Natural killer cell (primary cell): ENCODE measurements at regions of chr18 and their contacts with region 1.

Region 1: GRCh38 chr18:23586249-23587196 is at the start of gene NPC1:
- DNase-seq: peak; percentile 93 to 96
- ATAC-seq: peak; percentile 86 to 95 (median 89)
- H3K4me3 ChIP-seq: peak within 1 kb of the TSS; percentile 99
- H3K4me3 Mint-ChIP-seq: peak within 1 kb of the TSS; percentile 96
- H3K27ac ChIP-seq: peak within 1 kb of the TSS; percentile 100
- H3K27ac Mint-ChIP-seq: peak within 1 kb of the TSS; percentile 81 to 94
- H3K4me1 ChIP-seq: peaks cover 37% of the 10 kb centered on the region
- H3K4me1 Mint-ChIP-seq: peaks cover 40 to 47% of the 10 kb centered on the region in 2 donors
- H3K27me3 ChIP-seq: no peaks in the 10 kb centered on the region
- H3K27me3 Mint-ChIP-seq: no peaks in the 10 kb centered on the region
- CTCF ChIP-seq: peak; percentile 96
- total RNA-seq, gene NPC1: 143 to 203 (median 173) TPM

Region 2: DNA sequence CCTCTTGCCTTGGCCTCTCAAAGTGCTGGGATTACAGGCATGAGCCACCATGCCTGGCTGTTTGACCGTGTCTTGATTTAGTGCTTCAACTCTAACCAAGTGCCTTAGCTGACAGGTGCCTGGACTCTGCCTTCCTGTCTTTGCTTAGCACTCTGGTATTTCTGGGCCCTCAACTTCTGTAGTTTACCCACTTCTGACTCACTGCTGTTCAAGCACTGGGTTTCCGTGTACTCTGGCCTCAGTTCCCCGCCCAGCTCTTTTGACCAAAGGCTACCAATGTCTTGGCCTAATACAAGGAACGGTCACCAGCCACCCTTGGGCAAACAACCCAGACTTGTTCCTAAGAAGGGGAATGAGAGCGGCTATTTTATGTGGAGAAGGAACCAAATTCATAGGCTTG is 486.9 kb before region 1 on chr18:
- intact Hi-C with region 1: no loop called
- DNase-seq: no peak
- ATAC-seq: no peak
- H3K4me3 ChIP-seq: no peak overlapping the region
- H3K4me3 Mint-ChIP-seq: no peak overlapping the region
- H3K27ac ChIP-seq: no peak overlapping the region
- H3K27ac Mint-ChIP-seq: no peak overlapping the region
- H3K4me1 ChIP-seq: no peaks in the 10 kb centered on the region
- H3K4me1 Mint-ChIP-seq: no peaks in the 10 kb centered on the region
- H3K27me3 ChIP-seq: no peaks in the 10 kb centered on the region
- H3K27me3 Mint-ChIP-seq: peaks cover 0 to 7% of the 10 kb centered on the region in 2 donors
- CTCF ChIP-seq: no peak

Region 3: GRCh38 chr18:23503038-23503962 is 83.2 kb before region 1 on chr18 and contains the start of gene RMC1:
- intact Hi-C with region 1: loop called (anchors 1 kb)
- DNase-seq: peak; percentile 97 to 98
- ATAC-seq: peak; percentile 89 to 97 (median 91)
- H3K4me3 ChIP-seq: peak within 1 kb of the TSS; percentile 81
- H3K4me3 Mint-ChIP-seq: peak within 1 kb of the TSS; percentile 98
- H3K27ac ChIP-seq: peak within 1 kb of the TSS; percentile 90
- H3K27ac Mint-ChIP-seq: peak within 1 kb of the TSS; percentile 94
- H3K4me1 ChIP-seq: peaks cover 47% of the 10 kb centered on the region
- H3K4me1 Mint-ChIP-seq: peaks cover 53 to 55% of the 10 kb centered on the region in 2 donors
- H3K27me3 ChIP-seq: no peaks in the 10 kb centered on the region
- H3K27me3 Mint-ChIP-seq: no peaks in the 10 kb centered on the region
- CTCF ChIP-seq: no peak
- total RNA-seq, gene RMC1: 71.1 to 84.4 (median 77.2) TPM

Region 4: DNA sequence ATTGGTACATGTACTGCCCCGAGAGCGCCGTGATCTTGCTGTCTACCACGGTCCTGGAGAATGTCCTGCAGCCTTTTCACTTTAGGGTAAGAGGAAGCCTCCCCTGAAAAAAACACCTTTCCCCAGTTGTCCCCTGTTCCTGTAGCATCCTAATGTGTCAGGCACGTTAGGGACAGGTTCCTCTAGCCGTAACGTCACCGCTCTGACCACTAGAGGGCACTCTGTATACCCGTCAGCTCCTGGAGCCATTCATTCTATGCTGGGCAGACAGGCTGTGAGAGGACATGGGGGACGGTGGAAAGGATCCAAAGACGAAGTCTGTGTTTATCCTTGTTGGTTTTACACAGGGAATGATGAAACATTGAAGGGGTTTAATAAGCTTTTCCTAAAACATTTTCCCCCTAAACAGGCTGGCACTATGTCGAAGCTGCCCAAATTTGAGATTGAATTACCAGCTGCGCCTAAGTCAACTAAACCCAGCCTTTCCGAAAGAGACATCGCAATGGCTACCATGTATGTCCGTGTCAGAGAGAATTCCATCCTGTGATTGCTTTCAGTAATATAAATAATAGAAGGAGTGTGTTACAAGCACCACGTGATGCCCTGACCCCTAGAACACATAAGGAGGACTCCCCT is 70.5 kb before region 1 on chr18:
- intact Hi-C with region 1: loop called (anchors 1 kb)
- DNase-seq: peak; percentile 57 to 89
- ATAC-seq: peak; percentile 95 to 99 (median 98)
- H3K4me3 ChIP-seq: no peak overlapping the region
- H3K4me3 Mint-ChIP-seq: no peak overlapping the region
- H3K27ac ChIP-seq: no peak overlapping the region
- H3K27ac Mint-ChIP-seq: peak overlapping the region; percentile 58 to 59
- H3K4me1 ChIP-seq: peaks cover 3% of the 10 kb centered on the region
- H3K4me1 Mint-ChIP-seq: peaks cover 13 to 19% of the 10 kb centered on the region in 2 donors
- H3K27me3 ChIP-seq: no peaks in the 10 kb centered on the region
- H3K27me3 Mint-ChIP-seq: no peaks in the 10 kb centered on the region
- CTCF ChIP-seq: peak; percentile 79

Region 5: GRCh38 chr18:23547846-23548245 is 38.7 kb before region 1 on chr18:
- intact Hi-C with region 1: loop called (anchors 2 kb)
- DNase-seq: no peak
- ATAC-seq: no peak
- H3K4me3 ChIP-seq: no peak overlapping the region
- H3K4me3 Mint-ChIP-seq: no peak overlapping the region
- H3K27ac ChIP-seq: no peak overlapping the region
- H3K27ac Mint-ChIP-seq: peak overlapping the region; percentile 2 to 15
- H3K4me1 ChIP-seq: no peaks in the 10 kb centered on the region
- H3K4me1 Mint-ChIP-seq: peaks cover 16 to 20% of the 10 kb centered on the region in 2 donors
- H3K27me3 ChIP-seq: no peaks in the 10 kb centered on the region
- H3K27me3 Mint-ChIP-seq: no peaks in the 10 kb centered on the region
- CTCF ChIP-seq: no peak

Region 6: DNA sequence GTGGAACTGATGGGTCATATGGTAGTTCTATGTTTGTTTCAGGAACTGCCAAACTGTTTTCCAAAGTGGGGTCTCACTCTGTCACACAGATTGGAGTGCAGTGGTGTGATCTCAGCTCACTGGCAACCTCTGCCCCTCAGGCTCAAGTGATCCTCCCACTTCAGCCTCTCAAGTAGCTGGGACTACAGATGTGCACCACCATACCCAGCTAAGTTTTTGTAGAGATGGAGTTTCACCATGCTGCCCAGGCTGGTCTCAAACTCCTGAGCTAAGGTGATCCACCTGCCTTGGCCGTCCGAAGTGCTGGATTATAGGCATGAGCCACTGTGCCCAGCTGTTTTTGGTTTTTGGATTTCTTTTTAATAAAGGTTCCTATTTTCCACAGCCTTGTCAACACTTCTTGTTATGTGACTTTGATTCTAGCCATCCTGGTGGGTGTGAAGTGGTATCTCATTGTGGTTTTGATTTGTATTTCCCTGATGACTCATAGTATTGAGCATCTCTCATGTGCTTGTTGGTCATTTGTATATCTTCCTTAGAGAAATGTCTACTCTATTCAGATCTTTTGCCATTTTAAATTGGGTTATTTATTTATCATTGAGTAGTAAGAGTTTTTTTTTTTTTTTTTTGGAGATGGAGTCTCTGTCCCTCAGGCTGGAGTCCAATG is 23.0 kb before region 1 on chr18:
- intact Hi-C with region 1: loop called (anchors 1 kb)
- DNase-seq: peak in 1 of 2 donors; percentile 61
- ATAC-seq: peak; percentile 88 to 97 (median 90)
- H3K4me3 ChIP-seq: no peak overlapping the region
- H3K4me3 Mint-ChIP-seq: peak overlapping the region; percentile 10
- H3K27ac ChIP-seq: peak overlapping the region; percentile 8
- H3K27ac Mint-ChIP-seq: peak overlapping the region; percentile 85 to 99
- H3K4me1 ChIP-seq: peaks cover 14% of the 10 kb centered on the region
- H3K4me1 Mint-ChIP-seq: peaks cover 23 to 36% of the 10 kb centered on the region in 2 donors
- H3K27me3 ChIP-seq: no peaks in the 10 kb centered on the region
- H3K27me3 Mint-ChIP-seq: no peaks in the 10 kb centered on the region
- CTCF ChIP-seq: no peak

Region 7: GRCh38 chr18:23573626-23574431 is 12.7 kb before region 1 on chr18:
- intact Hi-C with region 1: loop called (anchors 1 kb)
- DNase-seq: peak; percentile 49 to 65
- ATAC-seq: peak; percentile 52 to 67 (median 57)
- H3K4me3 ChIP-seq: no peak overlapping the region
- H3K4me3 Mint-ChIP-seq: peak overlapping the region; percentile 91
- H3K27ac ChIP-seq: peak overlapping the region; percentile 75
- H3K27ac Mint-ChIP-seq: peak overlapping the region; percentile 94 to 99
- H3K4me1 ChIP-seq: peaks cover 67% of the 10 kb centered on the region
- H3K4me1 Mint-ChIP-seq: peaks cover 68 to 76% of the 10 kb centered on the region in 2 donors
- H3K27me3 ChIP-seq: no peaks in the 10 kb centered on the region
- H3K27me3 Mint-ChIP-seq: no peaks in the 10 kb centered on the region
- CTCF ChIP-seq: no peak

Region 8: GRCh38 chr18:23661735-23662308 is 75.3 kb after region 1 on chr18:
- intact Hi-C with region 1: no loop called
- DNase-seq: peak in 1 of 2 donors; percentile 27
- ATAC-seq: peak in 2 of 3 donors; percentile 4 to 20
- H3K4me3 ChIP-seq: peak overlapping the region; percentile 15
- H3K4me3 Mint-ChIP-seq: peak overlapping the region; percentile 79
- H3K27ac ChIP-seq: no peak overlapping the region
- H3K27ac Mint-ChIP-seq: peak overlapping the region in 1 of 2 donors; percentile 31
- H3K4me1 ChIP-seq: peaks cover 21% of the 10 kb centered on the region
- H3K4me1 Mint-ChIP-seq: peaks cover 23 to 29% of the 10 kb centered on the region in 2 donors
- H3K27me3 ChIP-seq: peaks cover 16% of the 10 kb centered on the region
- H3K27me3 Mint-ChIP-seq: peaks cover 28% of the 10 kb centered on the region in 2 donors
- CTCF ChIP-seq: no peak

Region 9: GRCh38 chr18:23798249-23798648 is 211.7 kb after region 1 on chr18:
- intact Hi-C with region 1: no loop called
- DNase-seq: no peak
- ATAC-seq: no peak
- H3K4me3 ChIP-seq: no peak overlapping the region
- H3K4me3 Mint-ChIP-seq: no peak overlapping the region
- H3K27ac ChIP-seq: no peak overlapping the region
- H3K27ac Mint-ChIP-seq: no peak overlapping the region
- H3K4me1 ChIP-seq: no peaks in the 10 kb centered on the region
- H3K4me1 Mint-ChIP-seq: no peaks in the 10 kb centered on the region
- H3K27me3 ChIP-seq: no peaks in the 10 kb centered on the region
- H3K27me3 Mint-ChIP-seq: peaks cover 14 to 34% of the 10 kb centered on the region in 2 donors
- CTCF ChIP-seq: no peak